Aorta (tissue), 5 donors: ENCODE measurements at regions of chr21 and their contacts with region 1.

Region 1: GRCh38 chr21:25421327-25422028 is 185.8 kb downstream of the MRPL39 start:
- DNase-seq: no peak
- ATAC-seq: no peak
- H3K4me3 ChIP-seq: no peak overlapping the region
- H3K27ac ChIP-seq: no peak overlapping the region
- H3K4me1 ChIP-seq: no peaks in the 10 kb centered on the region
- H3K27me3 ChIP-seq: no peaks in the 10 kb centered on the region

Region 2: GRCh38 chr21:25573409-25574206 is 152.1 kb after region 1 on chr21:
- intact Hi-C with region 1: loop called in 1 of 2 experiments (anchors 10 kb)
- DNase-seq: no peak
- ATAC-seq: peak; percentile 62
- H3K4me3 ChIP-seq: no peak overlapping the region
- H3K27ac ChIP-seq: no peak overlapping the region
- H3K4me1 ChIP-seq: peaks cover 0 to 6% of the 10 kb centered on the region in 2 donors
- H3K27me3 ChIP-seq: no peaks in the 10 kb centered on the region